MCF 10A (cell line): ENCODE measurements at regions of chr1 and their contacts with region 1.

Region 1: GRCh38 chr1:9473032-9473792 is 66.1 kb upstream of the SLC25A33 start:
- DNase-seq: peak; percentile 86
- H3K4me3 Mint-ChIP-seq: no peak overlapping the region
- H3K27ac Mint-ChIP-seq: peak overlapping the region; percentile 55
- H3K4me1 Mint-ChIP-seq: peaks cover 8% of the 10 kb centered on the region
- H3K27me3 Mint-ChIP-seq: peaks cover 5% of the 10 kb centered on the region
- CTCF ChIP-seq: no peak

Region 2: DNA sequence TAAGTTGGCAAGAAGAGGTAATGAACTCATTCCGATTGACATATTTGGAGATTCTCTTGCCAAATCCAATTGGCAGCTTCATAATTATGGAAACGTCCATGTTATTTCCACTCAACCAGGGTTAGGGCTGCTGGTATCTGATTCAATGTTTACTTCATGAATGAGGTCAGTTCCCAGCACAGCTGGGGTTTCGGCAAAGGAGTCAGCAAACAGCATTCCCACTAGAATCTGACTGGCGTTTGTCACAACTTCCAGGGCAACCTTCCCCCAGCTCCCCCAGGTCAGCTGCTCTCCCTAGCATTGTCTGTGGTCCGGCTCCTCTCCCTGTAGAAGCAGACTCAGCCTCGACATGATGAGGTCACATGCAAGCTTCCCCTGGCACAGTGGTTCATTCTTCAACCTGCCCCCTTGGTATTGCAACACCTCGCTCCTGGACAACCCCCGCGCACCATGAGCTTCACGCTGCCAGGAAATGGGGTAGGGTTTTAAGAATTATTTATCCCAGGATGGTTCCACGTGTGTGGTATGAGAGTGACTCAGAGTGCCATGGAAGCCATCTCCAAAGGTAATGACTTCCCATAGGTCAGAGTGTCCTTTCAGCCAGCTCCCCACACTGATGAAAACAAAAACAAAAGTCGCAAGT is 34.7 kb before region 1 on chr1:
- CTCF ChIA-PET with region 1: interaction called, 4 read pairs
- POLR2A ChIA-PET with region 1: interaction called, 196 read pairs
- intact Hi-C with region 1: no loop called
- DNase-seq: peak; percentile 91
- H3K4me3 Mint-ChIP-seq: peak overlapping the region; percentile 55
- H3K27ac Mint-ChIP-seq: peak overlapping the region; percentile 94
- H3K4me1 Mint-ChIP-seq: peaks cover 30% of the 10 kb centered on the region
- H3K27me3 Mint-ChIP-seq: no peaks in the 10 kb centered on the region
- CTCF ChIP-seq: no peak

Region 3: DNA sequence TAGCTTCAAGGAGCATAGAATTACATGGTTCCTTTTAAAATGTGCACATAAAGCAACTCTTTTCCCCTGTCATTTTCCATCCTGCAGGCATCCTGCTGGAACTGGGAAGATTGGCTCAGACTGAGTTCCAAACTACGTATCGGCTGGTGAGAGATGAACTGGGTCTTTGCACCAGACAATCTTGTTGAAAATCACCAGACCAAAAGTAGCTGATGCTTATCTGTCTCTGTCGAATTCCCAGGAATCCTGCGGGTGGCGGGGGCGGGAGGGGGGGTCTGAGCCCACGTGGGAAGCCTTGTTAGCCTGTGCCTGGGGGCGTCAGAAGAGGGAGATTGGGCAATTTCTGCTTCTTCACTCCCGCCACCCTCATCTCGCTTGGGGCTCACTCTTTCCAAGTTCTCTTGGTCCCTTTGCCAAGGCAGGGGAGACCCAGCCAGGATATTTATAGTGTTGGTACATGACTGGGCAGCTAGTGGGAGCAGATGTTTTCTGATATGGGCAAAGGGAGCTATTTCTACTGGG is 24.0 kb before region 1 on chr1:
- CTCF ChIA-PET with region 1: interaction called, 4 read pairs
- POLR2A ChIA-PET with region 1: interaction called, 196 read pairs
- intact Hi-C with region 1: no loop called
- DNase-seq: no peak
- H3K4me3 Mint-ChIP-seq: no peak overlapping the region
- H3K27ac Mint-ChIP-seq: no peak overlapping the region
- H3K4me1 Mint-ChIP-seq: peaks cover 12% of the 10 kb centered on the region
- H3K27me3 Mint-ChIP-seq: no peaks in the 10 kb centered on the region
- CTCF ChIP-seq: no peak